ENCODE measurements at regions of chr13 and their contacts with region 1.

Region 1: GRCh38 chr13:99528547-99528946 is 27.3 kb downstream of the TM9SF2 start:
- DNase-seq: no peak
- H3K4me3 Mint-ChIP-seq: no peak overlapping the region
- H3K27ac Mint-ChIP-seq: no peak overlapping the region
- H3K4me1 Mint-ChIP-seq: peaks cover 35% of the 10 kb centered on the region
- H3K27me3 Mint-ChIP-seq: no peaks in the 10 kb centered on the region

Region 2: GRCh38 chr13:99459099-99459850 is 69.3 kb before region 1 on chr13:
- intact Hi-C with region 1: no loop called
- DNase-seq: no peak
- H3K4me3 Mint-ChIP-seq: no peak overlapping the region
- H3K27ac Mint-ChIP-seq: no peak overlapping the region
- H3K4me1 Mint-ChIP-seq: peaks cover 19% of the 10 kb centered on the region
- H3K27me3 Mint-ChIP-seq: peaks cover 4% of the 10 kb centered on the region

Region 3: GRCh38 chr13:99614385-99614885 is 85.9 kb after region 1 on chr13:
- intact Hi-C with region 1: loop called (anchors 5 kb)
- DNase-seq: no peak
- H3K4me3 Mint-ChIP-seq: no peak overlapping the region
- H3K27ac Mint-ChIP-seq: no peak overlapping the region
- H3K4me1 Mint-ChIP-seq: peaks cover 5% of the 10 kb centered on the region
- H3K27me3 Mint-ChIP-seq: no peaks in the 10 kb centered on the region